ENCODE measurements at regions of chr18 and their contacts with region 1.

Region 1: GRCh38 chr18:59402432-59403090 is 43.5 kb upstream of the LMAN1 start:
- DNase-seq: peak; percentile 70
- ATAC-seq: peak; percentile 92

Region 2: GRCh38 chr18:59249205-59249774 is 153.3 kb before region 1 on chr18:
- intact Hi-C with region 1: loop called (anchors 5 kb)
- DNase-seq: no peak
- ATAC-seq: peak; percentile 60

Region 3: GRCh38 chr18:59308248-59308937 is 94.2 kb before region 1 on chr18:
- intact Hi-C with region 1: loop called (anchors 5 kb)
- DNase-seq: peak; percentile 91
- ATAC-seq: peak; percentile 100